ENCODE measurements at regions of chr17 and their contacts with region 1.

Region 1: GRCh38 chr17:39153599-39154051 is 2.2 kb upstream of the PLXDC1 start:
- DNase-seq: peak; percentile 90 to 94
- ATAC-seq: peak; percentile 65 to 69
- H3K4me3 ChIP-seq: peak overlapping the region; percentile 89
- H3K27ac ChIP-seq: peak overlapping the region; percentile 76 to 87
- H3K4me1 ChIP-seq: peaks cover 7% of the 10 kb centered on the region
- CTCF ChIP-seq: no peak; the same call in 2 of the 3 replicates
- EP300 ChIP-seq: no peak
- POLR2A ChIP-seq: no peak
- RAD21 ChIP-seq: no peak

Region 2: GRCh38 chr17:38735161-38735997 is 418.2 kb before region 1 on chr17:
- CTCF ChIA-PET with region 1: interaction called, 11 read pairs
- POLR2A ChIA-PET with region 1: no interaction called
- DNase-seq: peak; percentile 50 to 93
- ATAC-seq: peak in 1 of 2 experiments; percentile 32; a peak in 3 of 6 replicates
- H3K4me3 ChIP-seq: no peak overlapping the region
- H3K27ac ChIP-seq: peak overlapping the region in 1 of 2 experiments; percentile 34; a peak in 1 of 6 replicates
- H3K4me1 ChIP-seq: peaks cover 35% of the 10 kb centered on the region
- CTCF ChIP-seq: peak; percentile 96
- EP300 ChIP-seq: no peak
- POLR2A ChIP-seq: no peak
- RAD21 ChIP-seq: peak; percentile 71 to 78

Region 3: DNA sequence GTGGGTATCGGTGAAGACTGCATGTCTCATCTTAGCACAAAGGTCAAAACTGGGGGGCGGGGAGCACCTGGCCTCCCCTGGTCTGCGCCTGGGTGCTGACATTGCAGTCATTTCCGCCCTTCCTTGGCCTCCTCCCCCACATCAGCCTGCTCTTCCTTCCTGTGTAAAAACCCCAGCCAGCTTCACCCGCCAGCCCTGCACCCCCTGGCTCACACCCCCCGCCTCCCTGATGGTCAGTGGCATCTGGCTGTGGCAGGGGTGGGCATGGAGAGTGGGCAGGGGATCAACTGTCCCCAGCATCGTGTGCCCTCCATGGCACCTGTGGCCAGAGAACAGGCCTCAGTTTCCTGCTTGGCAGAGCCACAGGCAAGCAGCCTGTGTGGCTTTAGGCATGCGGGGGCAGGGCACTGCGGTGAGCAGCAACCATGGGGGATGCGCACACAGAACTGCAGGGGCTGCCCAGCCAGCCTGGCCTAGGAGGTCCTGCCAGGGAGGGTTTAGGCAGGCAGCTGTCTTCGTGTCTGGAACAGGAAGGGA is 254.7 kb before region 1 on chr17:
- CTCF ChIA-PET with region 1: interaction called, 14 read pairs
- POLR2A ChIA-PET with region 1: no interaction called
- DNase-seq: no peak
- ATAC-seq: no peak
- H3K4me3 ChIP-seq: no peak overlapping the region
- H3K27ac ChIP-seq: peak overlapping the region in 1 of 2 experiments; percentile 85; a peak in 3 of 6 replicates
- H3K4me1 ChIP-seq: peaks cover 66% of the 10 kb centered on the region
- CTCF ChIP-seq: no peak
- EP300 ChIP-seq: no peak
- POLR2A ChIP-seq: no peak
- RAD21 ChIP-seq: no peak

Region 4: GRCh38 chr17:38967290-38967738 is 186.3 kb before region 1 on chr17 and contains the start of gene FBXO47:
- CTCF ChIA-PET with region 1: interaction called, 22 read pairs
- POLR2A ChIA-PET with region 1: interaction called, 4 read pairs
- DNase-seq: peak; percentile 92 to 98
- ATAC-seq: peak; percentile 98 to 99
- H3K4me3 ChIP-seq: peak within 1 kb of the TSS; percentile 44
- H3K27ac ChIP-seq: peak within 1 kb of the TSS; percentile 78 to 84
- H3K4me1 ChIP-seq: peaks cover 9% of the 10 kb centered on the region; the same call in 2 of the 3 replicates
- CTCF ChIP-seq: no peak
- EP300 ChIP-seq: no peak
- POLR2A ChIP-seq: peak; percentile 61
- RAD21 ChIP-seq: 0 out of 5 replicates have a peak, but pooled peaks of 1 of the 2 experiments have one; percentile 17
- polyA plus RNA-seq, gene FBXO47: 0.04 TPM in 1 of 2 replicates, not detected in the other

Region 5: GRCh38 chr17:39026980-39027451 is 126.6 kb before region 1 on chr17:
- CTCF ChIA-PET with region 1: interaction called, 15 read pairs
- POLR2A ChIA-PET with region 1: no interaction called
- DNase-seq: peak in 1 of 2 experiments; percentile 40
- ATAC-seq: peak; percentile 69 to 79; a peak in 5 of 6 replicates
- H3K4me3 ChIP-seq: peak overlapping the region; percentile 42
- H3K27ac ChIP-seq: peak overlapping the region in 1 of 2 experiments; percentile 52; a peak in 3 of 6 replicates
- H3K4me1 ChIP-seq: no peaks in the 10 kb centered on the region
- CTCF ChIP-seq: no peak
- EP300 ChIP-seq: no peak
- POLR2A ChIP-seq: no peak
- RAD21 ChIP-seq: no peak

Region 6: DNA sequence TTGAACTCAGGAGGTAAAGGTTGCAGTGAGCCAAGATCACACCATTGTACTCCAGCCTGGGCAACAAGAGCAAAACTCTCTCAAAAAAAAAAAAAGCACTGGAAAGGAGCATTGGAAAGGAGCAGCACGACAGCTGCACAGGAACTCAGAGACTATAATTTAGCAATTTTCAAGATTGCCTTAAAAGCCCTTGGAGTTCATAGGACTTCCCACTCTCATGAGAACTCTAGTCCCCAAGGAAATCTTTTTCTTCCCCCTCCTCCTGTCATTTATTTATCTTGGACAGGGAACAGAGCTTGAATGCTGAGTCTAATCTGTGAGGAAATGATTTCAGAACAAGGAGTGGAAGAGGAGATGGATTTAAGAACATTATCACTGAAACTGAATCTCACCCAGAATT is 71.1 kb before region 1 on chr17:
- CTCF ChIA-PET with region 1: interaction called, 10 read pairs
- POLR2A ChIA-PET with region 1: no interaction called
- DNase-seq: no peak
- ATAC-seq: no peak
- H3K4me3 ChIP-seq: no peak overlapping the region
- H3K27ac ChIP-seq: no peak overlapping the region
- H3K4me1 ChIP-seq: no peaks in the 10 kb centered on the region
- CTCF ChIP-seq: no peak
- EP300 ChIP-seq: no peak
- POLR2A ChIP-seq: no peak
- RAD21 ChIP-seq: no peak

Region 7: GRCh38 chr17:39199820-39200069 is 46.1 kb after region 1 on chr17:
- CTCF ChIA-PET with region 1: interaction called, 4 read pairs
- POLR2A ChIA-PET with region 1: interaction called, 13 read pairs
- DNase-seq: peak; percentile 98 to 100
- ATAC-seq: peak; percentile 41 to 57; a peak in 4 of 6 replicates
- H3K4me3 ChIP-seq: peak overlapping the region; percentile 96
- H3K27ac ChIP-seq: peak overlapping the region; percentile 96
- H3K4me1 ChIP-seq: peaks cover 47% of the 10 kb centered on the region
- CTCF ChIP-seq: no peak
- EP300 ChIP-seq: no peak
- POLR2A ChIP-seq: peak; percentile 30; the same call in 1 of the 2 replicates
- RAD21 ChIP-seq: no peak

Region 8: GRCh38 chr17:39484178-39484577 is 330.6 kb after region 1 on chr17:
- CTCF ChIA-PET with region 1: no interaction called
- POLR2A ChIA-PET with region 1: no interaction called
- DNase-seq: no peak
- ATAC-seq: no peak
- H3K4me3 ChIP-seq: no peak overlapping the region
- H3K27ac ChIP-seq: no peak overlapping the region
- H3K4me1 ChIP-seq: peaks cover 37% of the 10 kb centered on the region
- CTCF ChIP-seq: no peak
- EP300 ChIP-seq: no peak
- POLR2A ChIP-seq: no peak
- RAD21 ChIP-seq: no peak